ENCODE measurements at regions of chr19 and their contacts with region 1.

Region 1: DNA sequence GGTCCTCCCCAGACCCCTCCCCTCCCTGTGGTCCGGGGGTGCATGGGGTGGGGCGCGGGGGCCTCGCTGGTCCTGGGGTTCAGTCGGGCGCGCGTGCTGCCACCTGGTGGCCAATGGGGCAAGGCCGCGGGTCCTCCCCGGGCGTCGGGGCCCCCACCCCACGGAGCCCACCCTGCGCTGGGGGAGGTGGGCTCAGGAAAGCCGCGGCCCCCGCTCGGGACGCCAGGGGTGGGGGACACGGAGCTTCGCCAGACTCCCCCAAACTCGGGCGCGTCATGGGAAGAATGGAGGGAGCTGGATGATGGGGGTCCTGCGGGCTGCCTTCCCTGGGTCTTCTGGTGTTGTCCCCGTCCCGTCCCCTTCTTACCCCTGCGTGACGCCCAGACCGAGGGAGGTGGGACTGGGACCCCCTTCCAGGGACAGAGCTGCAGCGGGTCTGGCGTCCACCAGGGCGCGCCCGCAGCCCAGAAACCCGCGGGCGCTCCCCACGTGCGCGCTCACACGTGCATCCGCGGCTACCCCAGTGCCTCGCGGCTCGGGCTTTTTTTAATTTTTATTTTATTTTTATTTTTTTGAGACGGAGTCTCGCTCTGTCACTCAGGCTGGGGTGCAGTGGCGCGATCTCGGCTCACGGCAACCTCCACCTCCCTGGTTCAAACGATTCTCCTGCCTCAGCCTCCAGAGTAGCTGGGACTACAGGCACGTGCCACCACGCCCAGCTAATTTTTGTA is 19.8 kb upstream of the TCF3 start:
- DNase-seq: peak; percentile 52
- H3K4me3 Mint-ChIP-seq: peak overlapping the region; percentile 56
- H3K27ac Mint-ChIP-seq: no peak overlapping the region
- H3K4me1 Mint-ChIP-seq: peaks cover 16% of the 10 kb centered on the region
- H3K27me3 Mint-ChIP-seq: peaks cover 38% of the 10 kb centered on the region
- CTCF ChIP-seq: peak; percentile 94

Region 2: DNA sequence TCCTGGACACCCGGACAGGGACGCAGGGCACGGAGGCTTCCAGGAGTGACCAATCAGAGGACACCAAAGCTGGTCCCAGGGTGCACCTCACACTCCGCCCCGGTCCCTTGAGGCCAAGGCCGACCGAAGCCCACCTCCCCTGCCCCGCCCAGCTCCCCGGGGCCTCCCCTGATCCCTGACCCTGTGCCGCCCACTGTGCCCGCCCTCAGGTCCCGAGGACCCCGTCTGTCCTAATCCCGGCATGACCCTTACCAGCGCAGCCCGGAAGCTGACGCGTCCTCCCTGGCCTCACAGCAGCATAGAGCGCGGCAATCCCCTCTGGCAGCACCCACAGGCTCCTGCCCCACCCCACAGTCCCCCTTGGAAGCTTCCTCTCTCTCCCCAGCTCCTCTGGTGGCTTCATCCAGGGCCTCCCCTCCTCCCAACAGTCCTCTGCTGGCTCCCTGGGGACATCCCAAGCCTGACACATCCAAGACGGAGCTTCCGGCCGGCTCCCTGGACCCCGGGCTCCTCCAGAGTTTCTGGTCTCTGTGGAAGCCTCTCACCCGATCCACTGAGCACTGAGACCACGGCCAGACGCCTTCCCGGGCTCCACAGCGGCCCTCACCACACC is 1148.0 kb before region 1 on chr19:
- CTCF ChIA-PET with region 1: no interaction called
- POLR2A ChIA-PET with region 1: no interaction called
- intact Hi-C with region 1: no loop called
- DNase-seq: no peak
- H3K4me3 Mint-ChIP-seq: no peak overlapping the region
- H3K27ac Mint-ChIP-seq: no peak overlapping the region
- H3K4me1 Mint-ChIP-seq: no peaks in the 10 kb centered on the region
- H3K27me3 Mint-ChIP-seq: no peaks in the 10 kb centered on the region
- CTCF ChIP-seq: no peak

Region 3: GRCh38 chr19:1747285-1748114 is 75.3 kb after region 1 on chr19:
- CTCF ChIA-PET with region 1: interaction called, 11 read pairs
- POLR2A ChIA-PET with region 1: interaction called, 7 read pairs
- intact Hi-C with region 1: no loop called
- DNase-seq: peak; percentile 100
- H3K4me3 Mint-ChIP-seq: peak overlapping the region; percentile 81
- H3K27ac Mint-ChIP-seq: peak overlapping the region; percentile 90
- H3K4me1 Mint-ChIP-seq: no peaks in the 10 kb centered on the region
- H3K27me3 Mint-ChIP-seq: peaks cover 10% of the 10 kb centered on the region
- CTCF ChIP-seq: no peak

Region 4: GRCh38 chr19:1773173-1773572 is 101.0 kb after region 1 on chr19:
- CTCF ChIA-PET with region 1: interaction called, 54 read pairs
- POLR2A ChIA-PET with region 1: interaction called, 3 read pairs
- intact Hi-C with region 1: no loop called
- DNase-seq: peak; percentile 93
- H3K4me3 Mint-ChIP-seq: peak overlapping the region; percentile 24
- H3K27ac Mint-ChIP-seq: peak overlapping the region; percentile 44
- H3K4me1 Mint-ChIP-seq: peaks cover 29% of the 10 kb centered on the region
- H3K27me3 Mint-ChIP-seq: no peaks in the 10 kb centered on the region
- CTCF ChIP-seq: no peak

Region 5: DNA sequence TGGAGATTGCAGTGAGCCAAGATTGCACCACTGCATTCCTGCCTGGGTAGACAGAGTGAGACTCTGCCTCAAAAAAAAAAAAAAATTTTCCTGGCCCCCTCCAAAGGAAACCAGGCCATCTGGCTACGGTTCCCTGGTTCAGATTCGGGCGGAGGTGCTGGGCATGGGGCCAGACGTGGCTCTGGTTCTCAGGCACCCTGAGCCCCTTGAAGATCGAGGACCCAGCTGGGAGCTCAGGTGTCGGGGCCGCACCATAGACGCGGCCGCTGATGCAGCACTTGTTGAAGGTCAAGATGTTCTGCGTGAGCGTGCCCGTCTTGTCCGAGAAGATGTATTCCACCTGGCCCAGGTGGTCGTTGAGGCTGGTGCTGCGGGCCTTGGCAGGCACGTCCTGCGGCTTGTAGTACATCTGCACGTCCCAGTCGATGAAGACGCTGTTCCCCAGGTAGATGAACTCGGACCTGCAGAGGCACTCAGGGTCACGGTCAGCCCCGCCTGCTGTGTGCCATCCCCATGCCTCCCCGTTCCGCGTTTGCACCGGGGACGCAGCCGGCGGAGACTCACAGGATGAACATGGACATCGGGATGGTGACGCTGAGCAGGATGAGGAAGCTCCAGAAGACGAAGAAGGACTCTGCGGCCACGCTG is 127.6 kb after region 1 on chr19:
- CTCF ChIA-PET with region 1: interaction called, 129 read pairs
- POLR2A ChIA-PET with region 1: interaction called, 3 read pairs
- intact Hi-C with region 1: loop called (anchors 2 kb)
- DNase-seq: no peak
- H3K4me3 Mint-ChIP-seq: no peak overlapping the region
- H3K27ac Mint-ChIP-seq: no peak overlapping the region
- H3K4me1 Mint-ChIP-seq: peaks cover 8% of the 10 kb centered on the region
- H3K27me3 Mint-ChIP-seq: no peaks in the 10 kb centered on the region
- CTCF ChIP-seq: no peak

Region 6: DNA sequence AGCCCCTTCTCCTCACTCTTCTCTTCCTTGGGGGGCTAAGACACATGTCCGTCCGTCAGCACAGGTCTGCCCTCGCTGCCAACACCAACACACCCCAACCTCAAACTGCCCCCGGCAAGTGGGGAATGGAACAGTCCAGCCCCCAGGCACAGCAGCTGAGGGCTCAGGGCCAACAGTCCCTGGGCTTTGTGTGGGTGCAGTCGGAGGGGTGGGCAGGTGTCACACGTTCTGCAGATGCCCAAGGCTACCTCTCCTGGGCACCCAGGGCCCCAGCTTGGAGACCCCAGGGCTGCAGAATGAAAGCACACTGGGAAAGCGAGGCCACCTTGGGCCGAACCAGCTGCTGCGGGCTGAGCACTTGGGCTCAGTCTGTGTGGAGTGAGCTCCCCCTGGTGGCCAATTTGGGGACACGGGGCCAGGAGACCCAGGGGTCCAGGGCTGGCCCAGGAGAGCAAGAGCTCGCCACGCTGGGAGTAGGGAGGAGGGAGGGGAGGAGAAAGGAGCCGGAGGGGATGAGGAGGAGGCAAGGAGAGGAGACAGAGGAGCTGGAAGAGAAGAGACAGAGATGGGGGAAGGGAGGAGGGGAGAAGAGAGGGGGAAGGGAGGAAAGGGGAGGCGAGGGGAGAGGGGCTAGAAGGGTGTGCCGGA is 153.8 kb after region 1 on chr19:
- CTCF ChIA-PET with region 1: interaction called, 10 read pairs
- POLR2A ChIA-PET with region 1: interaction called, 6 read pairs
- intact Hi-C with region 1: no loop called
- DNase-seq: peak; percentile 81
- H3K4me3 Mint-ChIP-seq: no peak overlapping the region
- H3K27ac Mint-ChIP-seq: no peak overlapping the region
- H3K4me1 Mint-ChIP-seq: peaks cover 4% of the 10 kb centered on the region
- H3K27me3 Mint-ChIP-seq: no peaks in the 10 kb centered on the region
- CTCF ChIP-seq: peak; percentile 96